Activated CD8-positive, alpha-beta memory T cell treated with anti-CD3 and anti-CD28 coated beads, Interleukin-2, amount 10 ng/mL, durations not matched to agents 7 days and 5 days (primary cell): ENCODE measurements at regions of chr12 and their contacts with region 1.

Region 1: GRCh38 chr12:53039851-53040250 is 10.0 kb upstream of the TNS2 start:
- DNase-seq: no peak
- ATAC-seq: no peak
- H3K4me3 Mint-ChIP-seq: no peak overlapping the region
- H3K27ac Mint-ChIP-seq: no peak overlapping the region
- H3K4me1 Mint-ChIP-seq: peaks cover 31% of the 10 kb centered on the region
- H3K27me3 Mint-ChIP-seq: no peaks in the 10 kb centered on the region

Region 2: DNA sequence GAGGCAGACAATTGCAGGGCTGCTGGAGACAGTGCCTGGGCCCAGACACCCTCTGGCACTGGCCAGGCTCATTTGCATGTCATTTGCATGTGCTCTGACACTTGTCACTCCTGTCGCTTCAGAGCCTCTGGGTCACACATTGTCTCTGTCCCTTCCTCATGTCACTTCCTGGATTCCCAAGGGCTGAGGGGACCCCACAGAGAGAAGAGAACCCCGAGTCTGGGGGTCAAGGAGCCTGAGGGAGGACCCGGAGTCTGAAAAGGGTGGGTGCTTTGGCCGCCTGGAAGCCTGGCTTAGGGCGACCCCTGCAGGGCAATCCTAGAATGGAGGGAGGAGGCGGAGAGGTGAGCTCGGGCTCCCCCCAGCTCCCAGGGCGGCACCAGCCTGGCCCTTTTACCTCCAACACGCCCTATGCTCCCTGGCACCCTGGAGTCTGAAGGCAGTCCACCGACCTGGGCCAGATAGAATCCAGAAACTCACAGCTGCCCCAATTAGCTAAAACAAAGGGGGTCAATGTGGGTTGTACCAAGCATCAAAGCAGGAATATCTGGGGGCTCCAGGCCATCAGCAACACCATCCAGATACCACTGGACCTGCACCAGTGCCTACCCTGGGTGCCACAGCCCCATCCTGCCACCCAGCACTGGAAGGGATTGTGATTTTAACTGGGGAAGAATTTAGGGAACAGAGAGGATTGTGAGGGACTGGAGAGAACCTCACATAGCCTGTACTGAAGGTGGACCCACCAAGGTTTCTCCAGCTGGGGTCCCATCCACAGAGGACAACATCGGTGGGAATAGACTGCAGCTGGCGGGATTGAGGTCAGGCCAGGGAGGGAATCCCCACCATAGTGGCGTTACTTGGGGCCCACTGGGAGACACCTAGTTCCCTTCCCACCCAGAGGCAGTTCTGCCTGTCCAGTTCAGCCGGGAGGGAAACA is 169.2 kb before region 1 on chr12:
- CTCF ChIA-PET with region 1: no interaction called
- DNase-seq: peak; percentile 83
- ATAC-seq: peak; percentile 53
- H3K4me3 Mint-ChIP-seq: no peak overlapping the region
- H3K27ac Mint-ChIP-seq: no peak overlapping the region
- H3K4me1 Mint-ChIP-seq: peaks cover 13% of the 10 kb centered on the region
- H3K27me3 Mint-ChIP-seq: peaks cover 6% of the 10 kb centered on the region

Region 3: GRCh38 chr12:53025250-53025649 is 14.6 kb before region 1 on chr12:
- CTCF ChIA-PET with region 1: interaction called, 10 read pairs
- DNase-seq: no peak
- ATAC-seq: no peak
- H3K4me3 Mint-ChIP-seq: no peak overlapping the region
- H3K27ac Mint-ChIP-seq: no peak overlapping the region
- H3K4me1 Mint-ChIP-seq: no peaks in the 10 kb centered on the region
- H3K27me3 Mint-ChIP-seq: no peaks in the 10 kb centered on the region

Region 4: DNA sequence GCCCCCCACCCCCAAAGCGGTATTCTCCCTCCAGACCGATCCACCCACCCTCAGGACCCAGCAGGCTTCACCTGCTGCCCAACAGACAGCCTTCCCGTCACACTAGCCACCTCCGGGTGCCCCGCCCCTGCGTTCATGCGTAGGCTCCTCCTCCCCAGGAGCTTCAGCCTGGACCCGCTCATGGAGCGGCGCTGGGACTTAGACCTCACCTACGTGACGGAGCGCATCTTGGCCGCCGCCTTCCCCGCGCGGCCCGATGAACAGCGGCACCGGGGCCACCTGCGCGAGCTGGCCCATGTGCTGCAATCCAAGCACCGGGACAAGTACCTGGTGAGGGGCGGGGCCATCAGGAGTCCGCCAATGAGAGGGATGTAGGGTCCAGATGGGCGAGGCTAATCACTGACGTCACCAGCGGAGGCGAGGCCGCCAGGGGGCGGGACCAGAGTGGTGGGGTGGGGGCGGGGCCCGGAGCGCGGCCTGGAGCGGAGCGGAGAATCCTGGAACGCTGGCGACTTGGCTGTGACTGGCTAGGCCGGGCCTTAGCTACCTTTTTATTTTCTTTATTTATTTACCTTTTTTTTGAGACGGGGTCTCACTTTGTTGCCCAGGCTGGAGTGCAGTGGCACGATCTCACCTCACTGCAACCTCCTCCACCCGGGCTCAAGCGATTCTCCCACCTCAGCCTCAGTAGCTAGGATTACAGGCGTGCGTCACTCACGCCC is 14.4 kb after region 1 on chr12:
- CTCF ChIA-PET with region 1: interaction called, 24 read pairs
- DNase-seq: peak; percentile 95
- ATAC-seq: peak; percentile 94
- H3K4me3 Mint-ChIP-seq: peak overlapping the region; percentile 92
- H3K27ac Mint-ChIP-seq: peak overlapping the region; percentile 86
- H3K4me1 Mint-ChIP-seq: peaks cover 24% of the 10 kb centered on the region
- H3K27me3 Mint-ChIP-seq: no peaks in the 10 kb centered on the region